Activated naive CD4-positive, alpha-beta T cell treated with anti-CD3 and anti-CD28 coated beads, Interleukin-2, amount 10 ng/mL, durations not matched to agents 7 days and 5 days (primary cell): ENCODE measurements at regions of chr21 and their contacts with region 1.

Region 1: GRCh38 chr21:34745557-34746255 is 76.9 kb downstream of the CLIC6 start:
- DNase-seq: peak; percentile 62
- H3K4me3 Mint-ChIP-seq: peak overlapping the region; percentile 3
- H3K27ac Mint-ChIP-seq: no peak overlapping the region
- H3K4me1 Mint-ChIP-seq: peaks cover 6% of the 10 kb centered on the region
- H3K27me3 Mint-ChIP-seq: peaks cover 43% of the 10 kb centered on the region

Region 2: DNA sequence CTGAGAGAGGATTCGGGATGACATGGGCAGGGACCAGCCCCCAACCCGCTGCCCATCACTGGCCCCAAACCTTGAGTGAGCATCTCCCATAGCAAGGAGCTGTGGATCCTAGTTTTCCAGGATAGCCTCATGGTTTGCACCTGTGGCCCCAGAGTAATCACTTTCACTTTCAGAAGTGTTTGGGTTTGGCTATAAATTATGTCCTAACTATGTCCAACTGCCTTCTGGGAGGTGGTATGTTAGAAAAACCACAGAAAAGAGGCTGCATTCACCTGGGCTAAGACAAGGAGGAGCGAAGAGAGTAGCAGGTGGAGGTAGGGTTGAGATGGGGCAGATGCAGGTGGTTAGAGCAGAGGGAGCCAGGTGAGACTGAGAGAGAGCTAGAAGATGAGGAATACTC is 96.3 kb before region 1 on chr21:
- CTCF ChIA-PET with region 1: no interaction called
- DNase-seq: no peak
- H3K4me3 Mint-ChIP-seq: no peak overlapping the region
- H3K27ac Mint-ChIP-seq: no peak overlapping the region
- H3K4me1 Mint-ChIP-seq: peaks cover 5% of the 10 kb centered on the region
- H3K27me3 Mint-ChIP-seq: peaks cover 18% of the 10 kb centered on the region

Region 3: DNA sequence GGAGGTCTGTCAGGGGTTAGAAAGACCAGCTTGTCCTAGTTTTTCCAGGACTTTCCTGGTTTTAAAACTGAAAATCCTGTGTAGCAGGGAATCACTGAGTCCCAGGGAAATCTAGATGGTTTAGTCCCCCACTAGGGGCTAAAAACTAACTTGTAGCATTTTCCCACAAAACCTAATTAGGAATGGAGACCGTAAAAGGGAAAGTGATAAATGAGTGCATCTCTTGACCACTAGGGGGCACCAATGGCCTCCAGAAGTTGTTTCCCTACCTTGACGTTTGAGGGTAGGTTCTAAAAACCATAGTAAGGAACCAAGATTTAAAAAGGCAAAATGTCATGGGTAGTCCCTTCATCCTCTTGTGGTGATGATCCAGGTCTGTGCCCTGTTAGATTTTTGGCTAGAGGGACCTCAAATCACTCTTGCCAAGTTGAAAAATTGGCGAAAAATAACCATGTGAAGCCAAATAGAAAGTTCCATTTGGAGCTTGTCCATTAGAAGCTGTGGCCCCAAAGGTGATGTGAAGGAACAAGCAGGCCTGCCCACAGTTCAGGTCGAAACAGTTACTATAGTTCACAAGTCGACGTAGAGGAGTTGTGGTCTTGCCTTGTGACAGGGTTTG is 52.4 kb before region 1 on chr21:
- CTCF ChIA-PET with region 1: interaction called, 11 read pairs
- DNase-seq: peak; percentile 61
- H3K4me3 Mint-ChIP-seq: no peak overlapping the region
- H3K27ac Mint-ChIP-seq: no peak overlapping the region
- H3K4me1 Mint-ChIP-seq: peaks cover 7% of the 10 kb centered on the region
- H3K27me3 Mint-ChIP-seq: peaks cover 49% of the 10 kb centered on the region

Region 4: DNA sequence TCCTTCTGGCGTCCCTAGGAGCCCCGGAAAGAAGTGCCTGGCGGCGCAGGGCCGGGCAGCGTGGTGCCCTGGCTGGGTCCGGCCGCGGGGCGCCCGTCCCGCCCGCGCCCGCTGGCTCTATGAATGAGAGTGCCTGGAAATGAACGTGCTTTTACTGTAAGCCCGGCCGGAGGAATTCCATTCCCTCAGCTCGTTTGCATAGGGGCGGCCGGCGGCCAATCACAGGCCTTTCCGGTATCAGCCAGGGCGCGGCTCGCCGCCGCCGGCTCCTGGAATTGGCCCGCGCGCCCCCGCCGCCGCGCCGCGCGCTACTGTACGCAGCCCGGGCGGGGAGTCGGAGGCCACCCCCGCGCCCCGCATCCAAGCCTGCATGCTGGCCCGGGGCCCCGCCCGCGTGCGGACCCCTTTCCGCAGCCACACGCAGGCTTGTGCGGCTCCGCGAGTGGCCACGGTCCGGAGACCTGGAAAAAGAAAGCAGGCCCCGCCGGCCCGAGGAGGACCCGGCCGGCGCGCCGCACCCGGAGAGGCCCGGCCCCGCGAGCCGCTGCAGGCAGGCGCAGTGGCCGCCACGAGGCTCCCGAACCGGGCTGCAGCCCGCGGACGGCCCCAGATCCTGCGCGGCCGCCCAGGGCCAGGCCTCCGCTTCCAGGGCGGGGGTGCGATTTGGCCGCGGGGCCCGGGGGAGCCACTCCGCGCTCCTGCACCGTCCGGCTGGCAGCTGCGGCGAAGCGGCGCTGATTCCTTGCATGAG is 143.0 kb after region 1 on chr21:
- CTCF ChIA-PET with region 1: interaction called, 18 read pairs
- DNase-seq: peak; percentile 85
- H3K4me3 Mint-ChIP-seq: peak overlapping the region; percentile 85
- H3K27ac Mint-ChIP-seq: peak overlapping the region; percentile 97
- H3K4me1 Mint-ChIP-seq: peaks cover 57% of the 10 kb centered on the region
- H3K27me3 Mint-ChIP-seq: peaks cover 13% of the 10 kb centered on the region

Region 5: GRCh38 chr21:35400233-35400957 is 654.7 kb after region 1 on chr21:
- CTCF ChIA-PET with region 1: interaction called, 28 read pairs
- DNase-seq: peak; percentile 50
- H3K4me3 Mint-ChIP-seq: no peak overlapping the region
- H3K27ac Mint-ChIP-seq: no peak overlapping the region
- H3K4me1 Mint-ChIP-seq: peaks cover 13% of the 10 kb centered on the region
- H3K27me3 Mint-ChIP-seq: peaks cover 14% of the 10 kb centered on the region

Region 6: GRCh38 chr21:35840197-35840799 is 1094.6 kb after region 1 on chr21:
- CTCF ChIA-PET with region 1: interaction called, 40 read pairs
- DNase-seq: peak; percentile 69
- H3K4me3 Mint-ChIP-seq: no peak overlapping the region
- H3K27ac Mint-ChIP-seq: no peak overlapping the region
- H3K4me1 Mint-ChIP-seq: no peaks in the 10 kb centered on the region
- H3K27me3 Mint-ChIP-seq: peaks cover 11% of the 10 kb centered on the region